AG04450 (cell line): ENCODE measurements at regions of chr16 and their contacts with region 1.

Region 1: DNA sequence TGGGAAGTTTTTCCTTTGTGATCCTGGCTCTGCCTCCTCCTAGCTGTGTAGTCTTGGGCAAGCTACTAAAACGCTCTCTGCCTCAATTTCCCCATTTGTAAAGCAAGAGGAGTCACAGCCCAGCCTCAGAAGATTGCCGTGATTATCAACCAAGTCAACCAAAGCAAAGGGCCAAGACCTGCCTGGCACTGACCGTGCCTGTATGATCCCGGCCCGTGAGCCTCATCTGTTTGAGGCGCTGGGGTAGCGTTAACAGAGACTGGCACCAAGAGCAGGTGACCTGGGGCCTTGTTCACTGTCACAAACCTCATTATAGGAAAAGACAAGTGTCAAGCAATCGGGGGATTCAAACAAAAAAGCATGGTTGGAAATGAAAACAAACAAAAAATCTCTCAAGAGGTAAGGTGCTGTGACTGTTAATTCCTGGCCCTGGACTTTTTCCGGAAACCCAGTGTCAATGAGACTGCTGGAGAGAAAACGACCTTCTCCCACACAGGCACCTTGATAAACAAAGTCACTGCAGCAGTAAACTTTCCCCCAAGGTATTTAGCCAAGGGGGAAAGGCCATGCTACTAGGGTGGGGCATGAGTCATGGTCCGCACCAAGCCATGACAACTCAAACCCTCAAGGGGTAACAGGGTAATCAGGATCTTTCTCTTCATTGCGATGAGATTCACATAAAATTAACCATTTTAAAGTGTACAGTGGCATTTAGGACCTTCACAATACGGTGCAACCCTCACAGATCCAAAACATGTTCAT is 5.4 kb downstream of the MEAK7 start:
- DNase-seq: no peak
- H3K4me3 ChIP-seq: no peak overlapping the region
- H3K27ac ChIP-seq: no peak overlapping the region
- H3K27me3 ChIP-seq: no peaks in the 10 kb centered on the region
- CTCF ChIP-seq: no peak

Region 2: GRCh38 chr16:84332975-84333684 is 165.9 kb before region 1 on chr16:
- CTCF ChIA-PET with region 1: no interaction called
- POLR2A ChIA-PET with region 1: no interaction called
- DNase-seq: no peak
- H3K4me3 ChIP-seq: no peak overlapping the region
- H3K27ac ChIP-seq: no peak overlapping the region
- H3K27me3 ChIP-seq: peaks cover 3% of the 10 kb centered on the region
- CTCF ChIP-seq: no peak

Region 3: DNA sequence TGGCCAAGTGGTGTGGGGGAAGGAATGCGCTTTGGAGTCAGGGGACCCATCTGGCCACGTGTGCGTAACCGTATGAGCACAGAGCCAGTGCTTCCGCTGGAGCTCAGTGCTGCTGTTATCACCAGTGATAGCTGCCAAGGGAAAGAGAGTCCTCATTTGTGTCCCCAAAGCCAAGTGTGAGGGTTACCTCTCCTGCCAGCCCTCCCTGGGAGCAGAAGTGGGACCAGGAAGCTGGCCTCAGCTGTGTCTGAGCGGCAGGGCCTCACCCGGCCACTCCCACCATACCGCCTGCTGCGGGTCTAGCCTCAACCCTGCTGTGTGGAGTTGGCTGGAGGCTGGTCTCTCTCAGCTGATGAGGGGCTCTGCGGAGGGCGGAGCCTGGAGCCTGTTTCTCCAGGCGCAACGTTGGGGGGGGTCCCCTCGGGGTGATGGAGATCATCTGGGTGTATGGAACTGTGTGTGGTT is 39.1 kb before region 1 on chr16:
- CTCF ChIA-PET with region 1: no interaction called
- POLR2A ChIA-PET with region 1: interaction called, 14 read pairs
- DNase-seq: no peak
- H3K4me3 ChIP-seq: no peak overlapping the region
- H3K27ac ChIP-seq: no peak overlapping the region
- H3K27me3 ChIP-seq: no peaks in the 10 kb centered on the region
- CTCF ChIP-seq: no peak

Region 4: DNA sequence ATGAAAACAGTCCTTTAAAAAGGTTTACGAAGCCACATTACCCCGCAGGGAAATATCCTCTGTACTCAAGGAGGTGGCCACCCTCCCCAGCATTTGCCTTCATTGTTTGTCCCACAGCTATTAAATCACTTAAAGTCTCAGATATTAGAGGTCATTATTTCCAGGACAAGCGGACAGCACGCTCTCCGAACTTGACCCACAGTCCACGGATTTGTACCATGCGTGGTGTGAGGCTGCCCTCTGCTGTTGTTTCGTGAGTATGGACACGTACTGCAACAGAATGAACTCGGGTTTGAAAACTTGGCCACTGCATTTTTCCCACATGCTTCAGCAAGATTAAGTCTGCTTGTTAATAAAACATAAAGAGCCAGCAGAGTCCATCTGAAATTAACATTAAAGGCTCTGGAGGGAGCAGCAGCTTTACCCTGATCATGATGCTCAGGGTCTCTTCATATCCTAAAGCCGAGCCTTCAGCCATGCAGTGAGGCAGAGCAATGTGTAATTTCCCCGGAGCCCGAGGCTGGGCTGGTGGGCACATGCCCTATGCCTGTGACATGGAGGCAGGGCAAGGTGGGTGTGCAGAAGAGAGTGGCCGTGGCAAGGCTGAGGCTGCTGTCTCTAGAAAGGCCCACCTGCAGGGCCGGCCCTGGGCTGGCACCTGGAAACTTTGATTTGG is 14.3 kb before region 1 on chr16:
- CTCF ChIA-PET with region 1: interaction called, 17 read pairs
- POLR2A ChIA-PET with region 1: interaction called, 4 read pairs
- DNase-seq: peak; percentile 36
- H3K4me3 ChIP-seq: no peak overlapping the region
- H3K27ac ChIP-seq: no peak overlapping the region
- H3K27me3 ChIP-seq: no peaks in the 10 kb centered on the region
- CTCF ChIP-seq: peak; percentile 82